ENCODE measurements at regions of chr17 and their contacts with region 1.

Region 1: GRCh38 chr17:31269578-31269983 is 27.5 kb downstream of the OMG start:
- DNase-seq: peak; percentile 99

Region 2: GRCh38 chr17:31156326-31156725 is 113.3 kb before region 1 on chr17:
- in situ Hi-C with region 1: no loop called
- DNase-seq: no peak

Region 3: GRCh38 chr17:31373150-31374093 is 103.8 kb after region 1 on chr17:
- in situ Hi-C with region 1: loop called (anchors 25 kb)
- DNase-seq: peak; percentile 72

Measured in ACHN (cell line).